ENCODE measurements at regions of chr6 and their contacts with region 1.

Region 1: GRCh38 chr6:118776607-118777549 is 117.1 kb upstream of the ASF1A start:
- DNase-seq: peak; percentile 84
- H3K4me3 ChIP-seq: no peak overlapping the region
- H3K27ac ChIP-seq: no peak overlapping the region
- H3K4me1 ChIP-seq: no peaks in the 10 kb centered on the region
- H3K27me3 ChIP-seq: peaks cover 7% of the 10 kb centered on the region in 2 experiments
- CTCF ChIP-seq: peak; percentile 58 to 59
- POLR2A ChIP-seq: no peak

Region 2: GRCh38 chr6:118565311-118565960 is 211.4 kb before region 1 on chr6:
- CTCF ChIA-PET with region 1: no interaction called
- POLR2A ChIA-PET with region 1: no interaction called
- dilution Hi-C with region 1: no loop called
- intact Hi-C with region 1: loop called (anchors 5 kb)
- DNase-seq: no peak
- H3K4me3 ChIP-seq: no peak overlapping the region
- H3K27ac ChIP-seq: no peak overlapping the region
- H3K4me1 ChIP-seq: no peaks in the 10 kb centered on the region
- H3K27me3 ChIP-seq: no peaks in the 10 kb centered on the region
- CTCF ChIP-seq: peak in 1 of 2 donors; percentile 21
- POLR2A ChIP-seq: no peak

Region 3: GRCh38 chr6:118618679-118619377 is 158.1 kb before region 1 on chr6:
- CTCF ChIA-PET with region 1: interaction called, 3 read pairs
- POLR2A ChIA-PET with region 1: no interaction called
- dilution Hi-C with region 1: no loop called
- intact Hi-C with region 1: loop called (anchors 1 kb)
- DNase-seq: peak; percentile 54
- H3K4me3 ChIP-seq: no peak overlapping the region
- H3K27ac ChIP-seq: no peak overlapping the region
- H3K4me1 ChIP-seq: no peaks in the 10 kb centered on the region
- H3K27me3 ChIP-seq: no peaks in the 10 kb centered on the region
- CTCF ChIP-seq: peak; percentile 78 to 82
- POLR2A ChIP-seq: no peak